ENCODE measurements at regions of chr16 and their contacts with region 1.

Region 1: GRCh38 chr16:79415983-79416640 is 184.4 kb downstream of the MAF start:
- DNase-seq: peak; percentile 13
- ATAC-seq: no peak
- H3K4me3 Mint-ChIP-seq: no peak overlapping the region
- H3K27ac Mint-ChIP-seq: no peak overlapping the region
- H3K4me1 Mint-ChIP-seq: peaks cover 29% of the 10 kb centered on the region
- H3K27me3 Mint-ChIP-seq: no peaks in the 10 kb centered on the region

Region 2: DNA sequence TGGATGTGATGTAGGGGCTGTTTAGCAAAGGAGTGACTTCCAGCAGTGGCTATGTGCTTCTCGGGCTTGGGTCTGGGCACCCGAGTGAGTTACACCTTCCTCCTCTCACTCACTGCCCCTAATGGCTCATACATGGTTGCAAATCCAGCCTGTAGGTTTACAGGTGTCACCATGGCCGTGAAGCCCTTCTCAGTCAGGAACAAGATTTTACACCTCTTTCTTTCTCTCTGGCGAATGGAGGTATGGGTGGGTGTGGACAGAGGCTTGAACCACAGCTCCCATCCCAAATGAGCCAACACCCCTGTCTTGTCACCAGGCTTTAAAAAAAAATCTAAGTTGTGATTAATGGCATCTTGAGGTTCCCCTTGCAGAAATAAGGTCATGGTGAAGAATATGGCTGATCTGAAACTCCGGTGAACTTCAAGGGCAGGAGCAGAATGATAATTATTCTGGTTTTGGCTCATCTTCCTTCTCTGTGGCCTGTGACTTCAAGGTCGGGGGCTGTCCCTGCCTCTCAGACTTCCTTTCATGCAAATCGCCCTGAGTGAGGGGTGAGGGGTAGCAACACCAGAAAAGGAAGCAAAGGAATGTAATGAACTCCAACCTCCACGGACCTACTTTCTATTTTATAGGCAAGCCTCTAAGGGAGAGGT is 146.8 kb before region 1 on chr16:
- CTCF ChIA-PET with region 1: no interaction called
- POLR2A ChIA-PET with region 1: no interaction called
- intact Hi-C with region 1: no loop called
- DNase-seq: peak; percentile 86
- ATAC-seq: peak; percentile 70
- H3K4me3 Mint-ChIP-seq: peak overlapping the region; percentile 19
- H3K27ac Mint-ChIP-seq: peak overlapping the region; percentile 86
- H3K4me1 Mint-ChIP-seq: peaks cover 89% of the 10 kb centered on the region
- H3K27me3 Mint-ChIP-seq: peaks cover 26% of the 10 kb centered on the region

Region 3: GRCh38 chr16:79517156-79517555 is 101.0 kb after region 1 on chr16:
- CTCF ChIA-PET with region 1: no interaction called
- POLR2A ChIA-PET with region 1: interaction called, 12 read pairs
- intact Hi-C with region 1: no loop called
- DNase-seq: no peak
- ATAC-seq: no peak
- H3K4me3 Mint-ChIP-seq: no peak overlapping the region
- H3K27ac Mint-ChIP-seq: no peak overlapping the region
- H3K4me1 Mint-ChIP-seq: no peaks in the 10 kb centered on the region
- H3K27me3 Mint-ChIP-seq: peaks cover 27% of the 10 kb centered on the region